ENCODE measurements at regions of chr19 and their contacts with region 1.

Region 1: GRCh38 chr19:51393959-51394836 is 3.8 kb upstream of the C19orf84 start:
- DNase-seq: peak; percentile 99
- ATAC-seq: peak; percentile 86
- H3K4me3 Mint-ChIP-seq: peak overlapping the region; percentile 98
- H3K27ac Mint-ChIP-seq: peak overlapping the region; percentile 98
- H3K4me1 Mint-ChIP-seq: peaks cover 48% of the 10 kb centered on the region
- H3K27me3 Mint-ChIP-seq: no peaks in the 10 kb centered on the region
- CTCF ChIP-seq: peak; percentile 20

Region 2: DNA sequence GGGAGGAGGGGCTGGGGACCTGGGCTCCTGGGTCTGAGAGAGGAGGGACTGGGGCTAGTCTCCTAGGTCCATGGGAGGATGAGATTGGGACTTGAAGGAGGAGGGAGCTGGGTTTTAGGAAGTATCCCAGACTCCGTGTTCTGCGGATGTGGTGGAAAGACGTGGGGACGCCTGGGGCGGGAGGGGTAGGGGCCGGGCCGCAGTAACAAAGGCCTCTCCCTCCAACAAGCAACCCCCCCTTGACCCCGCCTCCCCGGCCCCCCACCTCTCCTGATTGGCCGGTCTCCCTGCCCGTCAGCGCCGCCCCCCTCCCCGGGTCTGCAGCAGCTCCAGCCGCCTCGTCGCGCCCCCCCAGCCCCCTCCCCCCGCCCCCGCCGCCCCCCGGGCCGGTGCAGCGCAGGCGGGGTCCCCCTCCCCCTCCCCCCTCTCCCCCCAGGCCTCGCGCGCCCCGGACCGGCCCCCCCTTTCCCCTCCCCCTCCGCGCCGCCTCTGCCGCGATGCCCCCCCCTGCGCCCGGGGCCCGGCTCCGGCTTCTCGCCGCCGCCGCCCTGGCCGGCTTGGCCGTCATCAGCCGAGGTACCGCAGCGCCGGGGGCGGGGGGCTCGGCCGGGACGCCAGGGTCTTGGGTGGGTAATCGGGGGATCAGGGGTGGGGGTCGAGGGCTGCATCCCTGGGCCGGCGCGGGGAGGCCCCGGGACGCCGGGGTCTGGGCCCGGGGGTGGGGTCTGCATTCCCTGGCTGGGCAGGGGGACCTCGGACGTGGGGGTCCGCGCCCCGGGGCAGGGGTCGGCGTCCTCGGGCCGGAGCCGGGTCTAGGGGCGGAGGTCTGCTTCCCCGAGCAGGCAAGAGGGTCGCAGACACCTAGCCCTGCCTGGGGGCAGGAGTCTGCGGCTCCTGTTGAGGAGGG is 82.6 kb before region 1 on chr19 and contains the start of gene IGLON5:
- CTCF ChIA-PET with region 1: no interaction called
- POLR2A ChIA-PET with region 1: no interaction called
- intact Hi-C with region 1: no loop called
- DNase-seq: no peak
- ATAC-seq: no peak
- H3K4me3 Mint-ChIP-seq: no peak within 1 kb of the TSS
- H3K27ac Mint-ChIP-seq: no peak within 1 kb of the TSS
- H3K4me1 Mint-ChIP-seq: no peaks in the 10 kb centered on the region
- H3K27me3 Mint-ChIP-seq: peaks cover 46% of the 10 kb centered on the region
- CTCF ChIP-seq: no peak
- total RNA-seq, gene IGLON5: 0.16 to 0.23 TPM

Region 3: GRCh38 chr19:51338563-51339312 is 55.5 kb before region 1 on chr19:
- CTCF ChIA-PET with region 1: interaction called, 14 read pairs
- POLR2A ChIA-PET with region 1: interaction called, 6 read pairs
- intact Hi-C with region 1: no loop called
- DNase-seq: peak; percentile 95
- ATAC-seq: peak; percentile 74
- H3K4me3 Mint-ChIP-seq: peak overlapping the region; percentile 77
- H3K27ac Mint-ChIP-seq: peak overlapping the region; percentile 82
- H3K4me1 Mint-ChIP-seq: peaks cover 13% of the 10 kb centered on the region
- H3K27me3 Mint-ChIP-seq: peaks cover 1% of the 10 kb centered on the region
- CTCF ChIP-seq: peak; percentile 93

Region 4: DNA sequence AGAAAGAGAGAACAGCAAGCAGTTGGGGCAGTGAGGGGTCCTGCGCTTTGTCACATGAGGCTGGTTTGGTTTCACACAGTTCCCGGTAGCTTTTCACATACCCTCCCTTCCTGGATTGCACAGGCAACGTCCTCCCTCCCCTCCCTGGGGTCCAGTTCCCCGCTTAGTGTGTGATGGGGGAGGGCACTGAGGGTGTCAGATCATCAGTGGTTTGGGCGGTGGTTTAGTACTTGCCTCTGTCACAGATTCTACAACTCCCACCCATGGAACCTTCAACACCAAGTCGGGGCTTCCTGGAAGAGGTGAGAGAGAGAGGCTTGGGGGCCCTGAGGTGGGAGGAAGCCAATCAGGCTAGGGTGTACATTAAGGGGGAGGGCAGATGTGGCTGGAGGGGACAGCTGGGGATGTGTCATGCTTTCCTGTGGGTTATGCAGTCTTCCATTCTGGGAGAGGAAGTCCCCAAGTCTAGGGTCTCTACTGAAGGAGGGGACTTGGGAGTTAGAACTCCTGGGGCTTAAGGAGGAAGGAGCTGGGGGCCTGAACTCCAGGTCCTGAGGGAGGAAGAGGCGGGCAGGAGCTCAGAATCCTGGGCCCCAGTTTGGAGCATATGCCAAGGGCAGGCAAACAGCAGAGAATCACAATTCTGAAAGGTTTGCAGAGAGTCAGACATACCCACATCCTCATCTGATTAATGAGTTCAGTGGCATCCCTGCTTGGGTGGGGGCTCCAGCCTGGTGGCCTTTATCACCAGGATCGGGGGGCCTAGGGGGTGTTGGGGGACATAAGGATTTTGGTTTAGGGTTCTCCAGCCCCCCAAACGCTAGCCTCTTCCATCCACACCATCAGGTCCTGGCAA is 21.3 kb before region 1 on chr19 and contains the start of gene NKG7:
- CTCF ChIA-PET with region 1: interaction called, 9 read pairs
- POLR2A ChIA-PET with region 1: interaction called, 40 read pairs
- intact Hi-C with region 1: no loop called
- DNase-seq: peak; percentile 96
- ATAC-seq: peak; percentile 83
- H3K4me3 Mint-ChIP-seq: peak within 1 kb of the TSS; percentile 98
- H3K27ac Mint-ChIP-seq: peak within 1 kb of the TSS; percentile 94
- H3K4me1 Mint-ChIP-seq: peaks cover 62% of the 10 kb centered on the region
- H3K27me3 Mint-ChIP-seq: no peaks in the 10 kb centered on the region
- CTCF ChIP-seq: no peak
- total RNA-seq, gene NKG7: 258 to 283 TPM

Region 5: DNA sequence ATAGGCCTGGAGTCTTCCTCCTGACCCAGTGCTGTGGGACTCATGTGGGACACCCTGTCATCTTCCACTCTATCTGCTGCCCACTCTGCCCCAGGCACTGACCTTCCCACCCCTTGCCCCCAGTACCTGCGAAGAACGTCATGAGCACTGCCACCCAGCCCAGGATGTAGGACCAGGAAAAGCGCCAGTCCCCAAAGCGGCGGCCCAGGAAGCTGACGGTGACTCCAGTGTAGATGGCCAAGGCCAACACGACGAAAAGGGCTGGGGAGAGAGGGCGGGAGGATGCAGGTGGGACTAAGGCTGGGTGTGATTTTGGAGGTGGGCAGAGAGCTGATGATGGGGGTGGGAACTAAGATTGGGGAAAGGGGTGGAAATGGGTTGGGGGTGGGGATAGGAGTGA is 13.8 kb before region 1 on chr19:
- CTCF ChIA-PET with region 1: interaction called, 8 read pairs
- POLR2A ChIA-PET with region 1: interaction called, 11 read pairs
- intact Hi-C with region 1: no loop called
- DNase-seq: no peak
- ATAC-seq: no peak
- H3K4me3 Mint-ChIP-seq: no peak overlapping the region
- H3K27ac Mint-ChIP-seq: peak overlapping the region; percentile 56
- H3K4me1 Mint-ChIP-seq: peaks cover 39% of the 10 kb centered on the region
- H3K27me3 Mint-ChIP-seq: no peaks in the 10 kb centered on the region
- CTCF ChIP-seq: no peak

Region 6: GRCh38 chr19:51441410-51442390 is 47.5 kb after region 1 on chr19:
- CTCF ChIA-PET with region 1: interaction called, 49 read pairs
- POLR2A ChIA-PET with region 1: interaction called, 3 read pairs
- intact Hi-C with region 1: no loop called
- DNase-seq: peak; percentile 99
- ATAC-seq: peak; percentile 90
- H3K4me3 Mint-ChIP-seq: peak overlapping the region; percentile 74
- H3K27ac Mint-ChIP-seq: peak overlapping the region; percentile 94
- H3K4me1 Mint-ChIP-seq: peaks cover 61% of the 10 kb centered on the region
- H3K27me3 Mint-ChIP-seq: peaks cover 3% of the 10 kb centered on the region
- CTCF ChIP-seq: no peak

Region 7: DNA sequence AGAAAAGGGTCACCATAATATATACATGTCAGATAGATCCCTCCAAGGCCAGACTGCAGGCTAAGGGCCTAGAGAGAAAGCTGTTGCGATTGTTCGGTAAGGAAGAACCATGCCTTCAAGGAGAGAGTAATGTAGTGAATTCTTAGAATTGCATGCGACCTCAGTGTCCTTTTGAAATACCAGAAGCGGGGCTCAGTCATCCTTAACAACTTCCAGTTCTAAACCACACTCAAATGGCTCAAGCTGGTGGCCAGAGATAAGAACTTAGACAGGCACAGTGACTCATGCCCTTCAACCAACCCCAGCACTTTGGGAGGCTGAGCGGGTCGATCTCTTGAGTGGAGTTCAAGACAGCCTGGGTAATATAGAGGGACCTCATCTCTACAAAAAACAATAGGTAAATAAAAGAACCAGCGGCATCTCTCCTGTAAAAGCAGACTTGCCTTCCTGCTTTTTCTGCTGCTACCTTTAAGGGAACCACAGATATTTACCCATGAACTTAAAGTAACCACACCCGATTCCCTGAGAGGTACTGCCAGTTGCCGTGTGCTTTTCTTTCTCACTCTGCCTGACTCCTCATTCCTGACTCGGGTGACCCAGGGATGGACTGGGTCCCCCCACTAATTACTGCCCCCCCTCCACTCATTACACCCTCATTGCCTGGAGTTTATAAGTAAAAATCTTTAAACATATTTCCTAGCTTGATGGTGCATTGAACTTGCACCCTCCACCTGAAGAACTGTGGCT is 152.6 kb after region 1 on chr19:
- CTCF ChIA-PET with region 1: no interaction called
- POLR2A ChIA-PET with region 1: no interaction called
- intact Hi-C with region 1: no loop called
- DNase-seq: peak; percentile 51
- ATAC-seq: peak; percentile 76
- H3K4me3 Mint-ChIP-seq: no peak overlapping the region
- H3K27ac Mint-ChIP-seq: no peak overlapping the region
- H3K4me1 Mint-ChIP-seq: peaks cover 18% of the 10 kb centered on the region
- H3K27me3 Mint-ChIP-seq: peaks cover 42% of the 10 kb centered on the region
- CTCF ChIP-seq: no peak